Breast epithelium (tissue), 4 donors: ENCODE measurements at regions of chr7 and their contacts with region 1.

Region 1: DNA sequence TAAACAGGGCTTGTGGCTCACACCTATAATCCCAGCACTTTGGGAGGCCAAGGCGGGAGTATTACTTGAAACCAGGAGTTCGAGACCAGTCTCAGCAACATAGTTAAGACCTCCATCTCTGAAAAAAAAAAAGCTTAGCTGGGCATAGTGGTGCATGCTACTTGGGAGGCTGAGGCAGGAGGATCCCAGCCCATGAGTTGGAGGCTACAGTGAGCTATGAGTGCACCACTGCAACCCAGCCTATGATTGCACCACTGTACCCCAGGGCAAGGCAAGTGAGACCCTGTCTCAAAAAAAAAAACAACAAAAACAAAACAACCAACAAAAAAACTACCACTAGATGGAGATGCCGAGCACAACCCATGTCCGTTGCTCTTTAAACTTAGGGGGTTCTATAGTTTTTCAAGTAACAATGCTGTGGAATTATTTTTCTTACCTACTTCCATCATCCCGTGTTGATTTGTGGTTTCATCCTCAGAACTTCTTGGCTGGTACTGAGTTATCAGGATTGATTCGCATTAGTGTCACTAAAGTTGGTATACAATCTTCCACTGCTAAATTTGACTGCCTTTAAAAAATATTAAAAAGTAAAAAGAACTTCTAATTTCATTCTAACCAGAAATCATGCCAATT is 12.2 kb upstream of the REPIN1 start:
- DNase-seq: no peak
- H3K4me3 ChIP-seq: no peak overlapping the region
- H3K27ac ChIP-seq: no peak overlapping the region
- H3K4me1 ChIP-seq: no peaks in the 10 kb centered on the region
- H3K27me3 ChIP-seq: no peaks in the 10 kb centered on the region
- CTCF ChIP-seq: peak; percentile 23 to 48 (median 34)
- POLR2A ChIP-seq: no peak

Region 2: GRCh38 chr7:149362696-149363095 is 993.7 kb before region 1 on chr7:
- intact Hi-C with region 1: no loop called
- DNase-seq: no peak
- H3K4me3 ChIP-seq: no peak overlapping the region
- H3K27ac ChIP-seq: no peak overlapping the region
- H3K4me1 ChIP-seq: no peaks in the 10 kb centered on the region
- H3K27me3 ChIP-seq: no peaks in the 10 kb centered on the region
- CTCF ChIP-seq: no peak
- POLR2A ChIP-seq: no peak

Region 3: DNA sequence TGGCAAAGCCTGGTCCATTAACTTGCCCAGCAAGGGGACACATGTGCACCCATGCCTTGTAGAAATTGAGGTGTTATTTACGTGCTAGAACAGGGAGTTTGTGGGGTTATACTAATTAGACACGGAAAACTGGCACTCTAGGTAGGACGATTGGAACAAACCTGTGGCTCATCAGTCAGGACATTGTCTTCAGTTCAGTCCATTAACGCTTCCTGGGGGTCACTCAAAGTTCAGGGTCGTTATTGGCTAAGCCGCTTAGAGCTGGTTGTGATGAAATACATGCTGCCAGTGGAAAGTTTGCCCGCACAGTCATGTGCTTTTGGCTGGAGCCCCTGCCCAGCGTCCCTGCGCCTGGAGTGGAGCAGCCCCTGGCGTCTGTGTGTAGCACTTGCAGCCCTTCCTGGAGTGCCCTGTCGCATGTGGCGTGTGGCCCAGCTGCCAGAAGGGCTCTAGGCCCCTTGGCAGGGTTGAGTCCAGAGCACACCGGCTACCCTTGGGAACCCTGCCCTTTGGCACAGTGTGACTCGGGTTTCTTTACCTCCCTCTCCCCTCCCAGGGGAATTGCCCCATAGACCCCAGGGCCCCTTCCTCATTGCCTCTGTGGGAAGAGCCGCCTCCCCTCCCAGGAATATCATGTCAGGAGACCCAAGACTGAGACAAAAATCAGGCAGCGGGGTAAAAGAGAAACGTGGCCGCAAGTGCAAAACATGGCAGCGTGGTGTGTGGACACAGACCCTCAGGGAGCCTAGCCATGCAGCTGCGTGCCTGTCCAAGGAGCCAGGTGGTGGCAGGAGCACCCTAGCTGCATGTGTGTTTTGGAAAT is 32.5 kb after region 1 on chr7:
- intact Hi-C with region 1: loop called (anchors 1 kb)
- DNase-seq: peak; percentile 69 to 82
- H3K4me3 ChIP-seq: no peak overlapping the region
- H3K27ac ChIP-seq: peak overlapping the region; percentile 41 to 55
- H3K4me1 ChIP-seq: no peaks in the 10 kb centered on the region
- H3K27me3 ChIP-seq: no peaks in the 10 kb centered on the region
- CTCF ChIP-seq: peak; percentile 51 to 92 (median 69)
- POLR2A ChIP-seq: no peak